ENCODE measurements at regions of chr17 and their contacts with region 1.

Region 1: GRCh38 chr17:81142301-81143199 is 22.8 kb upstream of the PVALEF start:
- DNase-seq: peak; percentile 85
- H3K4me3 ChIP-seq: no peak overlapping the region
- H3K27ac ChIP-seq: no peak overlapping the region
- H3K4me1 ChIP-seq: peaks cover 0 to 9% (median 9%) of the 10 kb centered on the region in 4 donors
- H3K27me3 ChIP-seq: no peaks in the 10 kb centered on the region
- CTCF ChIP-seq: peak; percentile 12 to 63 (median 32)
- EP300 ChIP-seq: no peak
- POLR2A ChIP-seq: no peak

Region 2: GRCh38 chr17:81200695-81201580 is 58.4 kb after region 1 on chr17:
- intact Hi-C with region 1: loop called (anchors 5 kb)
- DNase-seq: no peak
- H3K4me3 ChIP-seq: no peak overlapping the region
- H3K27ac ChIP-seq: no peak overlapping the region
- H3K4me1 ChIP-seq: peaks cover 0 to 15% (median 0%) of the 10 kb centered on the region in 4 donors
- H3K27me3 ChIP-seq: no peaks in the 10 kb centered on the region
- CTCF ChIP-seq: peak; percentile 33 to 53 (median 40)
- EP300 ChIP-seq: no peak
- POLR2A ChIP-seq: no peak

Measured in sigmoid colon (tissue), 7 donors.